H1 (cell line): ENCODE measurements at regions of chr5 and their contacts with region 1.

Region 1: DNA sequence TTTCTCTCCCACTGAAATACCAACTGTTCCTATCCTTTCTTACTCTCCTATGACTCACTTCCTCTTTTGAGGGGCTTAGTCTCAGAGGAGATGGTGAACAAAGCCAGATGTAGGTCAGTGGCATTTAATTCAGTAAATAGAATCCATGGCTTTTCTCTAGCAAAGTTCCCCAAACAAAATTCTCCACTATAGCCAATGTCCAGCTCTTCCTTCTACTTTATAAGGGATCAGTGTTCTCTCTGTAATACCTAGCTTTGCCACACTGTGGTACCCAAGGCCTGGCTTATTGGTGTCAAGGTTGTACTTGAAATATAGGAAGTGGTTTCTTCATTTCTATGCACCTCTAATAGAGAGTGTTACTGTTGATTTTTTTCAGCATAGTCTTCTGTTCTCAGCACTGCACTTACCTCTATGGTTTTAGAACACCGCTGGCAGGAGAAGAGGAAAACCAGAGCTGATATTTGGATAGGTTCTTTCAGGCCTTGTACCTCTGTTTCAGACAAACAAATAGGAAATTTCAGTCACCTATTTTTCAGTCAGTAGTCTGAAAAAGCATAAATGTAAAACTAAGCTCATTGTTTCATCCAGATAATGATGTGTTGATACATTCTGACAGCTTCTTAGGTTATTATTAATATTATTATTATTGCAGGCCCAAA is 40.6 kb upstream of the ITGA2 start:
- DNase-seq: no peak
- H3K4me3 ChIP-seq: no peak overlapping the region
- H3K27ac ChIP-seq: no peak overlapping the region
- H3K4me1 ChIP-seq: no peaks in the 10 kb centered on the region
- H3K27me3 ChIP-seq: no peaks in the 10 kb centered on the region
- CTCF ChIP-seq: peak in 2 of 3 experiments; percentile 73 to 78; a peak in 3 of 4 replicates
- EP300 ChIP-seq: no peak
- POLR2A ChIP-seq: no peak
- RAD21 ChIP-seq: peak; percentile 90 to 94

Region 2: GRCh38 chr5:52705720-52706119 is 242.8 kb before region 1 on chr5:
- CTCF ChIA-PET with region 1: no interaction called
- POLR2A ChIA-PET with region 1: no interaction called
- DNase-seq: no peak
- H3K4me3 ChIP-seq: no peak overlapping the region
- H3K27ac ChIP-seq: no peak overlapping the region
- H3K4me1 ChIP-seq: no peaks in the 10 kb centered on the region
- H3K27me3 ChIP-seq: no peaks in the 10 kb centered on the region
- CTCF ChIP-seq: no peak
- EP300 ChIP-seq: no peak
- POLR2A ChIP-seq: no peak
- RAD21 ChIP-seq: no peak

Region 3: GRCh38 chr5:52844885-52845284 is 103.7 kb before region 1 on chr5:
- CTCF ChIA-PET with region 1: no interaction called
- POLR2A ChIA-PET with region 1: no interaction called
- DNase-seq: no peak
- H3K4me3 ChIP-seq: no peak overlapping the region
- H3K27ac ChIP-seq: no peak overlapping the region
- H3K4me1 ChIP-seq: no peaks in the 10 kb centered on the region
- H3K27me3 ChIP-seq: peaks cover 0 to 2% (median 0%) of the 10 kb centered on the region in 4 experiments; a peak in 1 of 7 replicates
- CTCF ChIP-seq: no peak
- EP300 ChIP-seq: no peak
- POLR2A ChIP-seq: no peak
- RAD21 ChIP-seq: no peak

Region 4: DNA sequence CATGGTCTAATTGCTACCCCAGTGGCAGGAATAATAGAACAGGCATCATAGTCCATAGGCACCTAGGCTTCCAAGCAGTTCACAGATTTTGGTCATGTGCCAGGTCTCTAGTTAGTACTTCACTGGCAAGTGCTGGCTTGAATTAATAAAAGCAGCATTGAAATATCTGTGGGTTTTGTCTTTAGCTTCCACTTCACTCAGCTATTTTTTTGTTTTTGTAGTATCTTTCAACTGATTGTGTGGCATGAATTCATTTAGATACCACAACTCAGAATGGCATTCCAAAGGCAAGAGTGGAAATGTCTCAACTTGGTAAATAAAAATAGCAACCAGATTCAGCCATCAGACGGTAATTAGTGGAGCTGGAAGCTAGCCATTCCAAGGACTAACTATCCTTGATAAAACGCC is 12.7 kb after region 1 on chr5:
- CTCF ChIA-PET with region 1: interaction called, 24 read pairs
- POLR2A ChIA-PET with region 1: no interaction called
- DNase-seq: no peak
- H3K4me3 ChIP-seq: no peak overlapping the region
- H3K27ac ChIP-seq: no peak overlapping the region
- H3K4me1 ChIP-seq: no peaks in the 10 kb centered on the region; a peak in 1 of 7 replicates
- H3K27me3 ChIP-seq: no peaks in the 10 kb centered on the region
- CTCF ChIP-seq: no peak
- EP300 ChIP-seq: no peak
- POLR2A ChIP-seq: no peak
- RAD21 ChIP-seq: no peak

Region 5: GRCh38 chr5:52989781-52990527 is 41.4 kb after region 1 on chr5:
- CTCF ChIA-PET with region 1: interaction called, 44 read pairs
- POLR2A ChIA-PET with region 1: no interaction called
- DNase-seq: peak in 1 of 2 experiments; percentile 57
- H3K4me3 ChIP-seq: peak overlapping the region; percentile 77 to 92 (median 88)
- H3K27ac ChIP-seq: no peak overlapping the region
- H3K4me1 ChIP-seq: no peaks in the 10 kb centered on the region; a peak in 1 of 7 replicates
- H3K27me3 ChIP-seq: peaks cover 0 to 13% (median 10%) of the 10 kb centered on the region in 4 experiments; a peak in 4 of 7 replicates
- CTCF ChIP-seq: peak; percentile 45 to 52 (median 45)
- EP300 ChIP-seq: no peak
- POLR2A ChIP-seq: no peak
- RAD21 ChIP-seq: peak; percentile 62 to 72

Region 6: GRCh38 chr5:53023969-53024368 is 75.4 kb after region 1 on chr5:
- CTCF ChIA-PET with region 1: interaction called, 15 read pairs
- POLR2A ChIA-PET with region 1: no interaction called
- DNase-seq: no peak
- H3K4me3 ChIP-seq: no peak overlapping the region
- H3K27ac ChIP-seq: no peak overlapping the region
- H3K4me1 ChIP-seq: no peaks in the 10 kb centered on the region
- H3K27me3 ChIP-seq: no peaks in the 10 kb centered on the region
- CTCF ChIP-seq: no peak
- EP300 ChIP-seq: no peak
- POLR2A ChIP-seq: no peak
- RAD21 ChIP-seq: no peak

Region 7: GRCh38 chr5:53052499-53052898 is 104.0 kb after region 1 on chr5:
- CTCF ChIA-PET with region 1: interaction called, 10 read pairs
- POLR2A ChIA-PET with region 1: no interaction called
- DNase-seq: no peak
- H3K4me3 ChIP-seq: no peak overlapping the region
- H3K27ac ChIP-seq: no peak overlapping the region
- H3K4me1 ChIP-seq: peaks cover 0 to 2% (median 0%) of the 10 kb centered on the region in 4 experiments; a peak in 1 of 7 replicates
- H3K27me3 ChIP-seq: no peaks in the 10 kb centered on the region
- CTCF ChIP-seq: no peak
- EP300 ChIP-seq: no peak
- POLR2A ChIP-seq: no peak
- RAD21 ChIP-seq: no peak

Region 8: GRCh38 chr5:53089345-53089991 is 140.9 kb after region 1 on chr5:
- CTCF ChIA-PET with region 1: interaction called, 72 read pairs
- POLR2A ChIA-PET with region 1: no interaction called
- DNase-seq: no peak
- H3K4me3 ChIP-seq: no peak overlapping the region
- H3K27ac ChIP-seq: no peak overlapping the region
- H3K4me1 ChIP-seq: no peaks in the 10 kb centered on the region
- H3K27me3 ChIP-seq: no peaks in the 10 kb centered on the region
- CTCF ChIP-seq: no peak
- EP300 ChIP-seq: no peak
- POLR2A ChIP-seq: no peak
- RAD21 ChIP-seq: no peak

Region 9: DNA sequence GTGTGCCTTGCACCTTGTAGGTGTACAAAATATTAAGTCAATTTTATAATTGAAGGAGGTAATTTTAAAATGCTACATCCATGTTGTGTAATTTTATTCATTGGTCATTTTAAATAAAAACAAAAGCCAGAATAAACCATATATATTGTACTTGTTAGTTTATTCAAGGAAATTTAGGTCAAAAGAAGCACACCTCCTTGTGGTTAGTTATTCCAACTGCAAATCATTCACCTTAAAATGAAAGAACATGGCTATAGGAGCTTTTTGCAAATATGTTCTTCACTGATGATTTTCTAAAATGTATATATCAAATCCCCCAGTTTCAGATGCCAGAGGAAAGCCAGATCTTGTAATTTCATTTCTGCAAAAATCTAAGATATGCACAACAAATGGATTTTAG is 166.4 kb after region 1 on chr5:
- CTCF ChIA-PET with region 1: interaction called, 25 read pairs
- POLR2A ChIA-PET with region 1: no interaction called
- DNase-seq: no peak
- H3K4me3 ChIP-seq: no peak overlapping the region
- H3K27ac ChIP-seq: no peak overlapping the region
- H3K4me1 ChIP-seq: peaks cover 0 to 5% (median 0%) of the 10 kb centered on the region in 4 experiments; a peak in 4 of 7 replicates
- H3K27me3 ChIP-seq: no peaks in the 10 kb centered on the region
- CTCF ChIP-seq: no peak
- EP300 ChIP-seq: no peak
- POLR2A ChIP-seq: no peak
- RAD21 ChIP-seq: no peak